Left cardiac atrium (tissue), 4 donors: ENCODE measurements at regions of chr11 and their contacts with region 1.

Region 1: GRCh38 chr11:128956401-128957201 is 13.9 kb upstream of the TP53AIP1 start:
- DNase-seq: no peak
- ATAC-seq: peak; percentile 83 to 87

Region 2: DNA sequence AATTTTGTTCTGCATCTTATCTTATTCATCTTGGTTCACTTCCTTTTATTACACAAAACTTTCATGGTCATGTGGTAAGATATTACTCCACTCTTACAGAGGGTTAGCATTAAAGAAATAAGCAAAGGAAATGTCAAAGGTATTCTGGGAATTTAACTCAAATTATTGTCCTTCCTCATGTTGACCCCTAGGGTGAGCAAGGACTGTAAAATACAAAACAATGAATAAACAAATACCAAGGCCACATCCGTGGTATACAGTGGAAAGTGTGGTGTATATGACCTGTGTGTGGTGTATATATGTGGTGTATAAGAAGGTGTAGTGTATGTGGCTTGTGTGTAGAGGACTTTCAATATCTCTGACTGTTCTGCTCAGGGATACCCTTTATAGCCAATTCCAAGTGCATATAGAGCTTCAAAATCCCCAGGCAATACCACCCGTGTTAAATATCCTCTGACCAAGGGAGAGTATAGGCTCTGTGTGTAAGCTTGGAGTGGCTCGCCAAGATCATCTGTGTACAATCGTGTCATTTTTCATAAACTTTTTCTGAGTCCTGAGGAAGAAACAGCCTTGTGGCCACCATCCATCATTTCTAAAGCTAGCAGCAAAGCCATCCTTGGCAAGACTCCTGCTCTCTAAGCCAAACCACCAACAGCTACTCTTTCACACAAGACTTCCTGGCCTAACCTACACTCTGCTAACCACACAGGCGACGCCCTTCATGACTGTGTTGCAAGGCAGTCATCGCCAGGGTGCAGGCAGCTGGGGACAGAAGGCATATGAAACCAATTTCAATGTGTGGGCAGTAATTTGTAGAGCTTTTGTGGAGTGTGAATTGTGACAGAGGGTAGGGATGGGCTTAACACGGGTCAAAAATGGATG is 917.2 kb before region 1 on chr11:
- intact Hi-C with region 1: loop called in 1 of 2 experiments (anchors 10 kb)
- DNase-seq: peak; percentile 33
- ATAC-seq: peak; percentile 81 to 93

Region 3: DNA sequence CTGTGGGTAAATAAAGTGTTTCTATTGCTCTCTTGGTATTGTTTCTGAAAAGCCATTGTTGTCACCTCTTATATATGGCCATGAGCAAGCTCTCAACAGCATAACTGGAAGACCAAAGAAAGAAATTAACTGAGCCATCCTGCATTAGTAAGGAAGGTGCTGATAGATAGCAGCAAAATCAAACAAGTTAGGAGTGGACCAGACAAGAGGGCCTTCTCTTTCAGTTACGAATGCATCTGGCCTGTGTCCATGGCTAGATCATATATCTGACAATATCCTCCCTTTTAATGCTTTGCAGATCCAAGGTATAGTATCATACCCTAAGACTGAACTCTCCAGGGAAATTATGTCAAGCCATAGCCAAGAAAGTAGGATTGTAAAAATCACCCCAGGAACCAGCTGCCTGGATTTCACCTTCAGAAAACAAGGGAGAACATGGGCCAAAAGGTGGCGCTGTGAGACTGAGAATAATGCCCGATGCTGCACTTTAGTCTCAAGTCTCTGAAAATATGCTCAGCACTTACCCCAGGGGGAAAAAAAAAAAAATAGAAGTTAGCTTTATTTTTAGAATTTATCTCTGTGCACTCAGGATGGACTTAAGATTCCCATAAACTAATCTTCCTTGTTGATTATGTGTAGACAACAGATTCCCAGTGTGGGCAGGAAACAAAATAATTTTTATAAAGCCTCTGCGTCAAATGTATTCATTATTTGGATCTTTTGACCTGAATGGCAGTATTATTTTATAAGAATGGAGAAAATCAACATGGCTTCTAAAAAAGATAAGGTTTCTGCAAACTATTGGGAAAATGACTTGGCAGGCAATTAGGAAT is 784.3 kb before region 1 on chr11:
- intact Hi-C with region 1: loop called in 1 of 2 experiments (anchors 10 kb)
- DNase-seq: peak; percentile 85
- ATAC-seq: peak; percentile 83 to 91

Region 4: GRCh38 chr11:128779036-128779435 is 177.6 kb before region 1 on chr11:
- intact Hi-C with region 1: no loop called
- DNase-seq: no peak
- ATAC-seq: no peak

Region 5: DNA sequence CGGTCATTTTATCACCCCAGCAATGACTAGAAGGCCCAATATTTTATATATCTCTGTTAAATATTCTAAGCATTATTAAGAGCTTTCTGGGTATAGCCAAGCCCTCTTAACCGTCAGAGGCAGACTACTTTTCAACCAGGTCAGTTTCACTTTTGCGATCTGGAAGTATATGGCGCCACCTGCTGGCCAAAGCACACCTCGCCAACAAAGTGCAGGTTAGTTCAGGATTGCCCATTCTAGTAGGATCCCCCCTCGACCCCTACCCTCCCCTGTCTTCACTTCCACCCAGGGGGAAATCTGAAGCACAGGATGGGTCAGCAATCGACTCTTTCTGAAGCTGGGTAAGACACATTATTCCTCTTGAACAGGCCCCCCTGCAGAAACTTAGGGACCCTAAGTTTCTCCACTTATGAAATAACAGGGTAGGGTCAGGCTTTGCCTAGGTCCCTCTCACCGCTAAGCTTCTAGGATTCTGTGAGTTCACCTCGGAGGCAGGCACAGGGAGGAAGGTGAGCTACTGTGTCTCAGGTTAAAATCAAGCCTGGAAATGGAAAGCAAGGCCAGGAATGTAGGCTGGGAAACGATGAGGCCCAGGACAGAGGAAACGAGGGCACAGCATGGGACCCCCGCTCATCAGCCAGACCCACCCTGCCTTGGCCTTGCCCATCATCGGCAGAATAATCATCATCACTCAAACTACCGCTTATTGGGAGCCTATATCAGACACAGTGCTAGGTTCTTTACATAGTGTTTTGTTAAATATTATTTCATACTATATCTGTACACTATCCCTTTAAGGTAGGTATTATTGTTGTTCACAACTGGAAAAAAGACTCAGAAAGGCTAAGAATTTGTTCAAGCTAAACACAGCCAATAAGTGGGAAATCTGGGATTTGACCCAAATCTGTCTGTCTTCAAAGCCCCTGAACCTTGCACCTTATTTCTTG is 125.2 kb before region 1 on chr11:
- intact Hi-C with region 1: no loop called
- DNase-seq: peak; percentile 73
- ATAC-seq: peak; percentile 76 to 78

Region 6: DNA sequence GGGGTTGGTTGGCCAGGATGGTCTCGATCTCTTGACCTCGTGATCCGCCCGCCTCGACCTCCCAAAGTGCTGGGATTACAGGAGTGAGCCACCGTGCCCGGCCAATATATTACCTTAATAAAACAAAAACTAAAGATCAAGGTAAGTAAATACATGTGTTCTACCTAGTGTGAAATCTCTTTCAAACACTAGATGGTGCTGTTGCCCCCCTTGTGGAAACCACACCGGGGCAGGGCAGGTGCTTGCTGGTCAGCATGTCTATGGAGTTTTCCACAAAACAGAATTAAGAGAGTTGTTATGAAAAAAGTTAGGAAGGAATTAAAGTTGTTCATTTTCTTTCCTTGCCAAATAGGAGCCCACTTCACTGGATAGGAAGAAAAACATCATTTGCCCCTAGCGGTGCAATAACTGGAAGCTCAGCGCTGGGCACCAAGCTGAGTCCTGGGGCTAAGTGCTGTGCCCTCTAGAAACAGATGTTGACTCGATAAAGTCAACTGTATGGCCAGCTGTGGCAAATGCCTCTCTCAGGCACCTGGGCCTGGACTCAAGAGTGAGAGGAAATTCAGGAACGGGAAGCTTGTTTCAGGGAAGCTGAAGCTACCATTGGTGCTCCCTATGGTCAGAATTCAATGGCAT is 71.8 kb before region 1 on chr11:
- intact Hi-C with region 1: loop called (anchors 2 to 5 kb)
- DNase-seq: no peak
- ATAC-seq: peak; percentile 77 to 80

Region 7: GRCh38 chr11:129117595-129118350 is 161.2 kb after region 1 on chr11:
- intact Hi-C with region 1: no loop called
- DNase-seq: no peak
- ATAC-seq: peak; percentile 64 to 68

Region 8: GRCh38 chr11:129451524-129451923 is 494.9 kb after region 1 on chr11:
- intact Hi-C with region 1: no loop called
- DNase-seq: no peak
- ATAC-seq: peak in 1 of 2 donors; percentile 65